Spleen (tissue), 13 donors: ENCODE measurements at regions of chr11 and their contacts with region 1.

Region 1: DNA sequence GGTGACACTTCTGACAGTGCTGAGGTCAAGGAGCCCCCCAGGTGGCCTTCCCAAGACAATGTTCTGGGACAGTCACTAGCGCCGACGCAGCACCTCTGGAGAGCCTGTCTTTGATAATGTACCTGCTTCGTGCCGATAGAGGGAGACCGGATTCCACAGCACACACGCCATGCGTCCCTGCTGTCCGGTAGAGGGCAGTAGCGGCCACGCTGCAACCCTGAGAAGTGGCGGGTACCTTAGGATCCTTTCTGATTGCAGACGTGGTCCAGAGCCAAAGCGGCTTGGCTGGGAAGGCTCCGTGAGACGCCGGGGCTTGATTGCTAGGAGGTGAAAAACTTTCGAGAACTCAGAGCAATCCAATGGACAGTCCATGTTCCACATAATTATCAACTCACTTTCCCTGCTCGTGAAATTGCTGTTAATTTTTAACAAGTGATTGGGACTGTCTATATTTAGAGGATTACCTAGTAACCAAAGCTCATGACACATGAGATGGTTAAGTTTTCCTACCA is 11.4 kb upstream of the BARX2 start:
- DNase-seq: peak; percentile 87
- H3K4me3 ChIP-seq: no peak overlapping the region
- H3K27ac ChIP-seq: no peak overlapping the region
- H3K4me1 ChIP-seq: peaks cover 0 to 8% (median 0%) of the 10 kb centered on the region in 6 donors
- H3K27me3 ChIP-seq: peaks cover 0 to 82% (median 49%) of the 10 kb centered on the region in 7 donors
- CTCF ChIP-seq: peak; percentile 26 to 90 (median 82)
- POLR2A ChIP-seq: no peak

Region 2: DNA sequence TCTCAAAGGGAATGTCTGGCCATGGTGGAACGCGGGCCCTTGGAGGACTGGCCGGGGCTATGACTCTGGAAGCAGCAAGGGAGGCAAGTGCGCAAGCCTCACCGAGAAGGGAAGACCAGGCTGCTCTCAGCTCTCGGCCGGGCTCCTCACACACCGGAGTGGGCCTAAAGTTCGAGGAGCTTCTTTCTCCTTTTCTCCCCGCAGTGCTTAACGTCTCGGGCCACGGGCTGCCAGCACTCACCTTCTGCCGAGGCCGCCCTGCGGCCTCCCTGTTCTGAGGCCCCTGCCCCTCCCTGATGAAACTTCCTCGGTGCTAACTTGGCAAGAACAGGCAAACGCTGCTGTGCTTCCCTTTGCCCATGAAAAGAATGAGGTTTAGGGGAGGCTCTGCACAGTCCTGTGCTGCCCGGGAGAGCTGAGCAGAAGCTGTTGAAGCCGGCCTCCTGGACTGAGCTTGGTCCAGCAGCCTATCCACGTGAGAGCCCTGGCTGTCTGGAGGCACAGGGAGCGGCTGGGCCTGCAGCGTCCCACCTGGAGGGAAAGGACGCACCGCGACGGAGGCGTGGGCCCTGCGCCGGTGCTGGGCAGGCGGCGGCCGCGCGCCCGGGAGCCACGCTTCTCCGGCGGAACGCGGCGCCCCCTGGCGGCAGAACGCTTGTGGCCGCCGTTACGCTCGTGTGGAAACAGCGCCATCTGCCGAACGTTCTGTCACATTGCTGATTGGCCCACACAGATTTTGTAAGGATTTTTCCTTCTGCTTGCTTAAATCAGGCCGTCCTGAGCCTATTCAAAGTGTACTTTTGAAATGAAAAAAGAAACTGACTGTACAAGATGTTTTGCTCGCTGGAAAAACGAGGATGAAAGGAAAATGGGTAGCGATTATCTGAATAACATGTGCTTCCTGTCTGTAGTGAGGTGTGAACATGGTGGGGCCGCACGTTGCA is 386.4 kb after region 1 on chr11:
- intact Hi-C with region 1: loop called (anchors 10 kb)
- DNase-seq: peak; percentile 93
- H3K4me3 ChIP-seq: peak overlapping the region in 3 of 8 donors; percentile 19 to 56 (median 37)
- H3K27ac ChIP-seq: no peak overlapping the region
- H3K4me1 ChIP-seq: peaks cover 0 to 11% (median 9%) of the 10 kb centered on the region in 6 donors
- H3K27me3 ChIP-seq: peaks cover 0 to 52% (median 6%) of the 10 kb centered on the region in 7 donors
- CTCF ChIP-seq: peak; percentile 50 to 99 (median 97)
- POLR2A ChIP-seq: no peak